Activated B cell treated with CpG ODN at 0.5 μM for 24 hours (primary cell): ENCODE measurements at regions of chr2 and their contacts with region 1.

Region 1: DNA sequence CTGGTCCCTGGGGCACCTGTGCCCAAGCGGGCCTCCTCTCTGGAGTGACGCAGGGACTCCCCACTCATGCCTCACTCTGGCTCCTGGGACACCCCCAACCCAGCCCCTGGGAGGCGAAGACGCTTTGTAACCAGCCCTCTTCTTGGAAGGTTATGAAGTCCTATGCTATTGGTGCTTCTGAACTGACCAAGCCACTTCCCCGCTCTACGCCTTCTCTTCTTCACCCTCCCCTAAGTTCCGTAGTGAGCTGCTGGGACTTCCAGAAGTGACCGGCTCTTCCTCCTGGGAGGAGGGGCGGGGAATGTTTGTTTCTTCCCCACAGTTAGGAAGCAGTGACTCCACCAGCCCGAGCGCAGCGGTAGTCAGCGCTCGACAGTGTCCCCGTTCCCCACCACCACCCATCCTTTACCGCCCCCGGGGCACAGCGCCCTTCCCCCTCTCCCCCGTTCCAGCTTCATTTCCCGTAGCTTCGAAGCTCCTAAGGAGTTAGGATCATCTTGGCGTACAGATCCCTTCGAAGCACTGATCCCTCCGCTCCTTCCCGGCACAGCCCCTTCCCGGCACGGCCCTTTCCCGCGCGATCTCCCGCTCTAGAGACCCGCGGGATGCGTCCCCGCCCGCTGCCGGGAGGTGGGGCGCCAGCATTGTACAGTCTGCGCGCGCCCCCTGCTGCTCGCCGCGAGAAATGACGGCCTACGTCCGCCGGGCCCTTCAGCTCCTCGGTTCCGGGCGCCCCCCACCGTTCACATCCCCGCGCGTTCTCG is 25.3 kb upstream of the NOTO start:
- DNase-seq: peak; percentile 87
- ATAC-seq: peak; percentile 92
- H3K4me3 Mint-ChIP-seq: peak overlapping the region; percentile 94
- H3K27ac Mint-ChIP-seq: peak overlapping the region; percentile 46
- H3K4me1 Mint-ChIP-seq: peaks cover 15% of the 10 kb centered on the region
- H3K27me3 Mint-ChIP-seq: peaks cover 43% of the 10 kb centered on the region
- CTCF ChIP-seq: peak; percentile 69

Region 2: DNA sequence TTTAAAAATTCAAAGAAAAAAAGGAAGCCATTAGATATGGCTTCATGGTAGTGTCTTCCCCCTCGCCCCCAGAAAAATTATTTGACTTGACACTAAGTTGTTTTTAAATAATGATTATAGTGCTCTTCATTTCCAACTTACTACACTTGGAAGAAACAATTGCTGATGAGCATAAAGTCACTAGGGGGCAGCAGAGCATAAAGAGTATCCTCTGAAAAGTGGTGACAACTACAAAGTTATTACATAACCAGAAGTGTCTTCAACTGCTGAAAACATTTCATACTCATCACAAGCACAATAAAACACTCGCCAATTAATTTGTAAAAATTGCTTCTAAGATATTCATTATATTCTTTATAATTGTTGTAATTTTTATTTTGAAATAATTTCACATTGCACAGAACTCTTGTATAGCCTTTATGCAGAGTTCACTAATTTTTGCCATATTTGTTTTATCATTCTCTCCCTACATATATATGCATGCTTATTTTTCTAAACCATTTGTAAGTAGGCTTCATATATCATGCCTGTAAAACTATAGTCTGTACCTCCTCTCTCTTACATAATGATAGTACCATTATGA is 406.1 kb before region 1 on chr2:
- CTCF ChIA-PET with region 1: interaction called, 3 read pairs
- POLR2A ChIA-PET with region 1: no interaction called
- intact Hi-C with region 1: loop called (anchors 1 kb)
- DNase-seq: no peak
- ATAC-seq: peak; percentile 52
- H3K4me3 Mint-ChIP-seq: no peak overlapping the region
- H3K27ac Mint-ChIP-seq: no peak overlapping the region
- H3K4me1 Mint-ChIP-seq: no peaks in the 10 kb centered on the region
- H3K27me3 Mint-ChIP-seq: no peaks in the 10 kb centered on the region
- CTCF ChIP-seq: peak; percentile 98

Region 3: GRCh38 chr2:72887754-72888437 is 289.2 kb before region 1 on chr2:
- CTCF ChIA-PET with region 1: interaction called, 41 read pairs
- POLR2A ChIA-PET with region 1: interaction called, 5 read pairs
- intact Hi-C with region 1: loop called (anchors 1 kb)
- DNase-seq: peak; percentile 46
- ATAC-seq: peak; percentile 32
- H3K4me3 Mint-ChIP-seq: peak overlapping the region; percentile 79
- H3K27ac Mint-ChIP-seq: no peak overlapping the region
- H3K4me1 Mint-ChIP-seq: peaks cover 13% of the 10 kb centered on the region
- H3K27me3 Mint-ChIP-seq: peaks cover 61% of the 10 kb centered on the region
- CTCF ChIP-seq: peak; percentile 46

Region 4: DNA sequence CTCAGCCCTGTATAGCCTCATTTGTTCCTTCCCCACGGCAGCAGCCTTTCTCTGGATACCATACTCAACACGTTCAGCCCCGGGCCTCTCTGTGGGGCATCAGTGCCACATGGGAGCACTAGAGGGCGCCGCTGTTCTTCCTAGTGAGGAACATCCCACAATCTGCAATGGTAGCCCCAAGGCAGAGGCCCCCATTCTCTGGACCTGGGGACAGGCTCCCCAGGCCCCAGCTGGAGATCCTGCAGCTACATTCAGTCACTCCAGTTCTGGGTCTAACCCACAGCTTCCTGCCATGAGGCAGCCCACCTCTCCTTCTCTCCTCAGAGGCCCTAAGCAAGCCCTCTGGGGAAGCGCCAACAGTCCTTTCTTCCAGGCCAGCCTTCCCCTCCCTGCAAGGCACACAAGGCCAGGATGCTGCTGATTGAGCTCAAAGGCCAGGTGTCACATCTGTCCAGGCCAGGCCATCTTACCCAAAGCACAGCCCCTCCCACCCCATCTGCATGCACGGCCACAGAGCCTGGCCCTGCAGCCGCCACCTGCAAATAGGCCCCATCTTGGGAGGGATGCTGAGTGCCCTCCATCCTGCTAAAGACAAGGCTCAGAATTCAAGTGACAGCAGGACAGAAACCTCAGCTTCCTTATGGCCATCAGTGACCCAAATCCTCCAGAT is 91.2 kb before region 1 on chr2:
- CTCF ChIA-PET with region 1: interaction called, 25 read pairs
- POLR2A ChIA-PET with region 1: no interaction called
- intact Hi-C with region 1: loop called (anchors 1 kb)
- DNase-seq: peak; percentile 62
- ATAC-seq: peak; percentile 96
- H3K4me3 Mint-ChIP-seq: no peak overlapping the region
- H3K27ac Mint-ChIP-seq: no peak overlapping the region
- H3K4me1 Mint-ChIP-seq: no peaks in the 10 kb centered on the region
- H3K27me3 Mint-ChIP-seq: peaks cover 3% of the 10 kb centered on the region
- CTCF ChIP-seq: no peak

Region 5: DNA sequence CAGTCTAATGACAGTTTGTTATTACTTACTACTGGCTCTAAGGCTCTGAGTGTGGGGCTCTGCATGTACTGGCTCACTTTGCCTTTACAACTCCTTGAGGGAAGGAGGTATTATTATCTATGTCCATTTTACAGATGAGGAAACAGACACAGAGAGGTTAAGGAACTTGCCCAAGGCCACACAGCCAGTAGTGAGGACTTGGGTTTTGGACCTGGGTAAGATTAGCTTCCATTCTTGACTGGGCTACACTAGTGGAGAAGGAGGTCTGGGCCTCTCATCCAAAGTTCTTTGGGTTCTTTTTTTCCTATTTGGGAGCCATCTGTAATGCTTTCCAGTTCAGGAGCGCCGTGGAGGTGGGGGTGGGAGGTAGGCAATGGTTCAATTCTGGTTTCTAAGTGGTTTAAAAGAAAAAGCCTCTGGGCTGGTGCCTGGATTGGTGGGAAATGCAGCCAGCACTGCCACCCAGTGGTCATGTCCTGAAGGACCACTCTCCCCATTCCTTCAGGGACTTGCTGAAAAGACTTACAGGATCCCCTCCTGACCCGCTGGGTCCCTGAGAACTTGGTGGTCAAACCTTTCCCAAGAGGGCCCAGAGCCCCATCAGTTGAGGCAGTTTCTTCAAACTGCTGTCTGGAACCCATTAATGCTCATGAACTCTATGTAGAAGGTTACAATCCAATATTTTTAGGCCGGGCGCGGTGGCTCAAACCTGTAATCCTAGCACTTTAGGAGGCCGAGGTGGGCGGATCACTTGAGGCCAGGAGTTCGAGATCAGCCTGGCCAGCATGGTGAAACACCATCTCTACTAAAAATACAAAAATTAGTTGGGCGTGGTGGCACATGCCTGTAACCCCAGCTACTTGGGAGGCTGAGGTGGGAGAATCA is 13.3 kb before region 1 on chr2:
- CTCF ChIA-PET with region 1: interaction called, 6 read pairs
- POLR2A ChIA-PET with region 1: no interaction called
- intact Hi-C with region 1: loop called (anchors 1 kb)
- DNase-seq: peak; percentile 56
- ATAC-seq: peak; percentile 94
- H3K4me3 Mint-ChIP-seq: no peak overlapping the region
- H3K27ac Mint-ChIP-seq: no peak overlapping the region
- H3K4me1 Mint-ChIP-seq: no peaks in the 10 kb centered on the region
- H3K27me3 Mint-ChIP-seq: peaks cover 11% of the 10 kb centered on the region
- CTCF ChIP-seq: peak; percentile 30

Region 6: DNA sequence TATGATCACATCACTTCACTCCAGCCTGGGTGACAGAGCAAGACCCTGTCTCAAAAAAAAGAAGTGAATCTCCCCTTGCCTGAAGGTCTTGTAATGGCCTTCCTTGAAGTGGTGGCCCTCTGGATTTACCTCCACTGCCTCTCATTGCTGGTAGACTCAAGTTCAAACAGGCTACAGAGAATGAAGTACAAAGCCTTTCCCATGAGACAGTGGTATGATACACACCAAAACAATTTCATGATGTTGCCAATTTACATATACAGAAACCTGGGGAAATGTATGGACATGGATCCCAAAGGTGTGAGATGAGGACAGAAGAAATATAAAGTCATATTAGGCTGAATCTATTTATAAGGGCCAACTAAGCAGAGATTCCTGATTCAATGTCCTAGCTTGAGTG is 20.5 kb after region 1 on chr2:
- CTCF ChIA-PET with region 1: no interaction called
- POLR2A ChIA-PET with region 1: no interaction called
- intact Hi-C with region 1: no loop called
- DNase-seq: no peak
- ATAC-seq: no peak
- H3K4me3 Mint-ChIP-seq: no peak overlapping the region
- H3K27ac Mint-ChIP-seq: no peak overlapping the region
- H3K4me1 Mint-ChIP-seq: peaks cover 6% of the 10 kb centered on the region
- H3K27me3 Mint-ChIP-seq: peaks cover 44% of the 10 kb centered on the region
- CTCF ChIP-seq: no peak